Activated CD4-positive, alpha-beta T cell treated with anti-CD3 and anti-CD28 coated beads, Interleukin-2, amount 10 ng/mL, durations not matched to agents 24 days and 14 days (primary cell): ENCODE measurements at regions of chr10 and their contacts with region 1.

Region 1: DNA sequence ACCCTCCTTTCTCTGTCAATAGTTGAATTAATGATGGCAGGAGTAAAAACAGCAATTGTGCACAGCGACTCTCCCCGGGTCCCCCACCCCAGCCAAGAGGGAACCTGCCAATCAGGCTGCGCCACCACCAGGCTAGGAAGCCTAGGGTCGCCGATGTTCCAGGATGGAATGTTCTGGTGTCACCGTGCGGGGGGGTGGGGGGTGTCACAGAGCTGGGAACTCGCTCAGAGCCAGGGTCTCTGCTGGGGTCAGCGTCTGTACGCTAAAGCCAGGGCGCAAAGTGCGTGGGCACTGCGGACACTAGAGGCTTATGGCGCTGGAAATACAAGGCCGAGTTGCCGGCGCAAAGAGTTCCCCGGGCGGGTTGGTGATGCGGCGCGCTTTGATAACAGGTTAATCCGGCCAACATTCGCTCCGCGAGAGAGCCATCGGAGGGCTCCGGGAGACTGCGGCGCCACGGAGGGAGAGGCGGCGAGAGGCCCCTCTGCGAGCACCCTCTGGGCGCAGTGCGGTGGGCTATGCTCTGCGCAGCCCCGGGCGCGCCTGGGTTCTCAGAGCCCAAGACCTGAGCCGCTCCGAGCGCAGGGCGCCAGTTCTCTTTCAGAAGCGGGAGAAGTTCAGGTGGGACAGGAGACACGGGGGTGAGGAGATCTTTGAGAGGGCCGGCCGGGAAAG is 192.3 kb downstream of the EMX2 start:
- DNase-seq: no peak
- H3K4me3 Mint-ChIP-seq: no peak overlapping the region
- H3K27ac Mint-ChIP-seq: no peak overlapping the region
- H3K4me1 Mint-ChIP-seq: no peaks in the 10 kb centered on the region
- H3K27me3 Mint-ChIP-seq: peaks cover 42% of the 10 kb centered on the region

Region 2: DNA sequence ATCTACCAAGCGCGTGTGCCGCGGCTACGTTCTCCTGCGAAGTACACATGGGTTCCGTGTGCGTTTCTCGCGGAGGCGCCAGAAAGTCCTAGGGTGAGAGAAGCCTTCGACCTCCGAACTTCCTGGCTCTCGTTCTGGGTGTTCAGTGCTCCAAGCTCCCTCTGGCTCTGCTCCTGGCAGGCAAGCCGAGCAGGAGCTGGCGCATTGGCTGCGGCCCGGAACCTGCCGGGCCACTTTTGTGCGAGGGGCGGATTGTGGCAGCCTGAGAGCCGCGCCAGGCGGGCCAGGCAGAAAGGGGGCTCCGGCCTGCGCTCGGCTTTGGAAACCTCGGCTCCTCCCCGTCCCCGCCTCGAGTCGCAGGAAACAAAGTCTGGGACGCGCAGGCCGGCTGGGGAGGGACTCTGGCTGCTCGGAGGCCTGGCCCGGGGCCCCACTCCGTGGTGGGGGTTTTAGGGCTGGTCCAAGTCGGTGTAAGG is 182.7 kb before region 1 on chr10:
- intact Hi-C with region 1: loop called (anchors 5 kb)
- DNase-seq: no peak
- H3K4me3 Mint-ChIP-seq: no peak overlapping the region
- H3K27ac Mint-ChIP-seq: peak overlapping the region; percentile 79
- H3K4me1 Mint-ChIP-seq: peaks cover 9% of the 10 kb centered on the region
- H3K27me3 Mint-ChIP-seq: peaks cover 77% of the 10 kb centered on the region

Region 3: DNA sequence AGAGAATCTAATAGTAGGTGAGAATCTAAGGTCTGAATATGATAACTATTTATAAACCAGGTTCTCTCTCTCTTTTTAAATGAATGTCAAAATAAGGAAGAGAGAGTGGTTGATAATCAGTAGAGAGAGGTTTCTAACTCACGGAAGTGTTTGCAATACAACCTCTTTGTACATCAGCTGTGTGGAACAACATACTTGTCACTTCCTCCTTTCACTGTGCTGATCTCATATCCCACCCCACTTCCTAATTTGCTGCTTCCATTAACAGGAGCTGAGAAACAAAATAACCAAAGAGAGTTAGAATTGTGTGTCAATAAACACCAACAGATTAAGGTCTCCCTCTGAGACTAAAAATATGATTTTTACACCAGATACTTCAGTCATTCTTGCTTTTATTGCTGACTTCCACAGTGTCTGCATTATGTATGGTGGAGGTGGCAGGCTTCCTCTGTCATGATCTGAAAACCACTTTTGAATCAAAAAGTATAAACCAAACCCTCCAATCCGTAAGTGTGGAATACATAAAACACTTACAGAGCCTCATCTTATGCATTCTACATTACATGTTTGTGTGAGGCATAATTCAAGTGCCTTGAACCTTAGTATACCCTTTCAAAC is 994.9 kb after region 1 on chr10:
- intact Hi-C with region 1: no loop called
- DNase-seq: no peak
- H3K4me3 Mint-ChIP-seq: peak overlapping the region; percentile 11
- H3K27ac Mint-ChIP-seq: peak overlapping the region; percentile 70
- H3K4me1 Mint-ChIP-seq: peaks cover 47% of the 10 kb centered on the region
- H3K27me3 Mint-ChIP-seq: no peaks in the 10 kb centered on the region